Heart left ventricle (tissue), 16 donors: ENCODE measurements at regions of chr1 and their contacts with region 1.

Region 1: GRCh38 chr1:26999440-26999987 is 6.0 kb downstream of the TRNP1 start:
- DNase-seq: peak; percentile 73 to 87 (median 79)
- ATAC-seq: peak; percentile 75 to 86 (median 84)
- H3K4me3 ChIP-seq: no peak overlapping the region
- H3K27ac ChIP-seq: peak overlapping the region; percentile 58 to 91 (median 80)
- H3K4me1 ChIP-seq: peaks cover 13 to 75% (median 52%) of the 10 kb centered on the region in 12 donors
- H3K27me3 ChIP-seq: peaks cover 0 to 23% (median 0%) of the 10 kb centered on the region in 9 donors
- CTCF ChIP-seq: no peak
- POLR2A ChIP-seq: no peak

Region 2: DNA sequence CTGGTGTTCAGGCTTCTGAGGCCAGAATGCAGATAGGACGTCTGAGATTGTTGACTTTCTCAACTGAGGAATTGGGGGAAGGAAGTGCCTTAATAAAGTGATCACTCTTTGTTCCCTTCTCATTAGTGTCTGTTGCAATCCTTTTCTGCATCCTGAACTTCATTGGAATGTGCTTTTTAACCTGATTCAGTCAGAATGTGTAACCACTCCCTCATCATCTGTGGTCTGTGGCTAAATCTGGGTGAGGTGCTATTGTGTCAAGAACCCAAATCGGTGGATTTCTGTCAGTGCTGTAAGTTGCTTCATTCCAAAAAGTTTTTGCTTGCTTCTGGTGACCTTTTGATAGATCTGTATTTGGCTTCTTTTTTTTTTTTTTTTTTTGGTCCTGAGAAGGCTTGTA is 265.5 kb before region 1 on chr1:
- intact Hi-C with region 1: no loop called
- DNase-seq: no peak
- ATAC-seq: peak in 1 of 4 donors; percentile 42
- H3K4me3 ChIP-seq: no peak overlapping the region
- H3K27ac ChIP-seq: peak overlapping the region in 1 of 12 donors; percentile 39
- H3K4me1 ChIP-seq: peaks cover 3 to 48% (median 26%) of the 10 kb centered on the region in 12 donors
- H3K27me3 ChIP-seq: no peaks in the 10 kb centered on the region
- CTCF ChIP-seq: no peak
- POLR2A ChIP-seq: no peak

Region 3: DNA sequence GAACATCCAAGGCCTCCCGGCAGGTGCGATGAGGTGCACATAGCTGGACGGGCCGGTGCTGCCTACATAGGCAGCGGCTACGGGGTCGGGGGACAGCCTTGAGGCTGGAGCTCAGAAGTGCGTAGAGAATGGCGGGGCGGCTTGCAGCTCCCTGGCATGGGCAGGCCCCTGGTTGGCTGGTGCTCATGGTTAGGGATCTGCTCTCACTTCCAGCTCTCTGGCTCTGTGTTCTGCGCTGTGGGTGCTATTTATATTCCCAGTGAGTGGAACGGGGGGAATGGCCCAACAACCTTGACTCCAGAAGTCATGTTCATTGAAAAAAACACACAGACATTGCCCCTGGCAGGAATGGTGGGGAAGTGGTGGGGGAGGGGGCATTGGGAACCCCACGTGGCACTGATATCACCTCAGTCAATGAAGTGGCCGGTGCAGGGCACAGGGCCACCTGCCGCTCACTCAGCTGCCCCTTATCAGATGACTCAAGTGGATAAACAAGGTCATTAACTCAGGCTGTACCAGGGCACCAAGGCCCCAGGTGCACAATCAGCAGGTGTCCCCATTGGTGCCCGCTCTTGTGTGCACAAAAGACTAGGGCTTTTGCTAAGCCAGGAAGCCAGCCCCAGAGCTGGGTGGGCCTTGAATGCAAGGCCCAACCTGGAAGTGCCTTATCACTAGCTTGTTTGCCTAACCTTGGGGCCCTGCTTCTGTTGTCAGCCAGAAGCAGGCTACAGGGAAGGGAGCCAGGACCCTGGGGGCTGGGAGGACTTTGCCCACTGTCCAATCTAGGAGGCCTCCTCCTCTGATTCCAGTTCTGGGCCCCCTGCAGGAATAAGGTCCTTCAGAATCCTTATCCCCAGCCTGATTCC is 85.5 kb before region 1 on chr1 and contains the start of gene NR0B2:
- intact Hi-C with region 1: loop called in 1 of 10 experiments (anchors 1 kb)
- DNase-seq: peak in 4 of 5 donors; percentile 57 to 83 (median 68)
- ATAC-seq: peak; percentile 76 to 88 (median 82)
- H3K4me3 ChIP-seq: peak within 1 kb of the TSS; percentile 8 to 66 (median 52)
- H3K27ac ChIP-seq: peak within 1 kb of the TSS; percentile 80 to 98 (median 90)
- H3K4me1 ChIP-seq: peaks cover 0 to 31% (median 3%) of the 10 kb centered on the region in 12 donors
- H3K27me3 ChIP-seq: no peaks in the 10 kb centered on the region
- CTCF ChIP-seq: no peak
- POLR2A ChIP-seq: peak in 1 of 2 donors; percentile 47
- total RNA-seq, gene NR0B2: 2.4 to 19.2 (median 6.6) TPM

Region 4: DNA sequence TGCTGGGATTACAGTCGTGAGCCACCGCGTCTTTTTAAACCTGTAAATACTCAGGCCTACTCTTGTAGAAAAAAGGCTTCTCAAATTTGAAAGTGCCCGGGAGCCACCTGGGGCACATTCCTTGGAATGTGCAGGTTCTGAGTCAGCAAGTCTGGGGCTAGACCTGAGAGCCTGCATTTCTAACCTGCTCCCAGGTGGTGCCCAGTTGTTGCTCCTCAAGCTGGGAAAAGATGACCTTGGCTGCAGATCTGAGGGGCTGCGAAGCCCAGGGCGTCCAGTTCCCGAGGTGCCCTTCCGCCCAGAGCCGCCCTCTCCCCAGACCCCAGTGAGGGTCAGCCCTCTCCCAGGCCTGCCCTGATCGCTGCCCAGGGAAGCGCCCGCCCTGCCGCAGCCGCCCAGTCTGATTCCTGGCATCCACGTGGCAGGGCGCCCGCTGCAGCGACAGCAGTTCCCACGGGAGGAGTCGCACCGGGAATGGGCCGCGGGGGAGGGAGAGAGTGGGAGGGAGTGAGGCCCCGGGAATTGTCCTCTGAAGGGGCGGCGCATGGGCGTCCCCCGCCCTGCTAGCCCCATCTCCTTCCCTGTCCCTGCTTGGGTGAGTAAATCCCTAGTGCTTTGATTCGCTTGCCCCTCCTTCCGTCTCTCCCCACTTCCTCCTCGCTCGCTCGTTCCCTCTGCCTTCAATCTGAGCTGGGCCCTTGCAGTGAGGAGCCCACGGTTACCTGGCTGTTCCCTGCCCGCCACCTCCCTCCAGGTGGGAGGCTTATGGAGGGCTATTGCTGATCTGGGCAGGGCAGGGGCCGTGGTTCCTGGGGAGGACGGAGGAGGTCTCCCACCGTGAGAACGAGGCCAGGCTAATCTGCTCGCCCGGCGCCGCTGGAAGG is 32.0 kb after region 1 on chr1:
- intact Hi-C with region 1: loop called in 2 of 10 experiments (anchors 5 kb)
- DNase-seq: peak; percentile 82 to 91 (median 87)
- ATAC-seq: peak; percentile 81 to 94 (median 92)
- H3K4me3 ChIP-seq: peak overlapping the region in 11 of 12 donors; percentile 2 to 50 (median 42)
- H3K27ac ChIP-seq: peak overlapping the region in 11 of 12 donors; percentile 51 to 80 (median 64)
- H3K4me1 ChIP-seq: peaks cover 0 to 29% (median 12%) of the 10 kb centered on the region in 12 donors
- H3K27me3 ChIP-seq: no peaks in the 10 kb centered on the region
- CTCF ChIP-seq: no peak
- POLR2A ChIP-seq: no peak